ENCODE measurements at regions of chr18 and their contacts with region 1.

Region 1: DNA sequence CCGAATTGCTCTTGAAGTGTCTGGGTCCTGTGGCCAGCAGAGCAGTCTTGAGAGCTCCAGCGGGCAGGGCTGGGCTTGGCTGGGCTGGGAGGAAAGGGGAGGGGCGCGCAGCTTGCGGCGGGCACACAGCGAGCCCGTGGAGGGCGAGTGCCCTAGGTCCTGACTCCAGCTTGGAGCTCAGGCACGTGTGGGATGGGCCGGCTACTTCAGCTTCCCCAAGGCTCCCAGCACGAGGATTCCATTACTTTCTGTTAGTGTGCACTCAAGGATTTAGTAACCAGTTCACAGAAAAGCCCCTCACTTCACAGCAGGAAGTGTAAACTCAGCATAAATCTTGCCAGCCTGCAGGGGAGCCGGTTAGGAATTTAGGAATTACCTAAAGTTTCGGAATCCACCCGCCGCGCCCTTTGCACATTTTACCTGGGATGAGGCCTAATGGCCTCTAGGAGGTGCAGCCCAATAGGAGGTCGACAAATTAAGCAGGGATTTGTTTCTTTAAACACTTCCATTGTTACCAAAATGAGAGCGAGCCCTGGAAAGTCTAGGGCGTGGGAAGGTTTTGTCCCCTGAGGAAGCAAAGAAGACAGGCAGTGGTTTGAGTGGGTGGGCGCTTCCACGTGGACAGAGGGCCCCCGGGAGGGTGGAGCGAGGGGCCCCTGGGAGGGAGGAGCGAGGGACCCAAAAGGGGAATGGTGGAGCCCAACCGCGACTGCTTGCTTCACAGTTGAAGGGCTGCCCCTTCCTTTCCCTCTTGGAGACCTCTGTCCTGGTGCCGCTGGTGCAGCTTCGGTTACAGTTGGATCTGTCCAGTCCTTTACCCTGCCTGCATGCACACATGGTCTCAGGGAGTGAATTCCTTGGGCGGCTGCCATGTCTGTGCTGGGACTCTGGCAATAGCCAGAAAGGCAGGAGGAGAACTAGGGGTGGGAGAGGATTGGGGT is 93.3 kb downstream of the CTAGE1 start:
- DNase-seq: peak; percentile 24 to 54 (median 46)
- H3K4me3 ChIP-seq: peak overlapping the region; percentile 9 to 66 (median 28)
- H3K4me3 Mint-ChIP-seq: peak overlapping the region; percentile 73 to 80
- H3K27ac ChIP-seq: peak overlapping the region; percentile 25 to 65
- H3K27ac Mint-ChIP-seq: peak overlapping the region; percentile 80 to 94 (median 90)
- H3K4me1 ChIP-seq: peaks cover 47 to 55% of the 10 kb centered on the region in 2 donors
- H3K4me1 Mint-ChIP-seq: peaks cover 21% of the 10 kb centered on the region
- H3K27me3 ChIP-seq: no peaks in the 10 kb centered on the region
- H3K27me3 Mint-ChIP-seq: peaks cover 4 to 14% (median 9%) of the 10 kb centered on the region in 3 donors
- CTCF ChIP-seq: peak; percentile 19

Region 2: DNA sequence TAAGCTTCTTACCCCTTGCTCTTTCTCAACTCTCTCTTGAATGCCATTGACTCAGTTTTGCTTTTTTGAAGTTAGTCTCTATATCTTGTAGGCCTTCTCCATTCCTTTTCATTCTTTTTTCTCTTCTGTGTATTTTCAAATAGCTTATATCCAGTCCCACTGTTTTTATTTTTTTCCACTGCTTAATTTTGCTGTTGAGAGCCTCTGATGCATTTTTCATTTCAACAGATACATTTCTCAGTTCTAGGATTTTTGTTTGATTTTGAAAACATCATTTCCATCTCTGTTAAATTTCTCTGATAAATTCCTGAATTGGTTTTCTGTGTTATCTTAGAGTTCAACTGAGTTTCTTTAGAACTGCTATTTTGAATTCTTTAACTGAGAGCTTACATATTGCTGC is 537.9 kb before region 1 on chr18:
- intact Hi-C with region 1: no loop called
- DNase-seq: no peak
- H3K4me3 ChIP-seq: no peak overlapping the region
- H3K4me3 Mint-ChIP-seq: no peak overlapping the region
- H3K27ac ChIP-seq: no peak overlapping the region
- H3K27ac Mint-ChIP-seq: no peak overlapping the region
- H3K4me1 ChIP-seq: peaks cover 0 to 2% of the 10 kb centered on the region in 2 donors
- H3K4me1 Mint-ChIP-seq: peaks cover 6% of the 10 kb centered on the region
- H3K27me3 ChIP-seq: no peaks in the 10 kb centered on the region
- H3K27me3 Mint-ChIP-seq: no peaks in the 10 kb centered on the region
- CTCF ChIP-seq: no peak

Region 3: GRCh38 chr18:22279741-22280452 is 44.6 kb before region 1 on chr18:
- intact Hi-C with region 1: loop called in 1 of 2 experiments (anchors 5 kb)
- DNase-seq: no peak
- H3K4me3 ChIP-seq: no peak overlapping the region
- H3K4me3 Mint-ChIP-seq: no peak overlapping the region
- H3K27ac ChIP-seq: no peak overlapping the region
- H3K27ac Mint-ChIP-seq: peak overlapping the region in 3 of 7 donors; percentile 21 to 51 (median 43)
- H3K4me1 ChIP-seq: peaks cover 8 to 10% of the 10 kb centered on the region in 2 donors
- H3K4me1 Mint-ChIP-seq: peaks cover 10% of the 10 kb centered on the region
- H3K27me3 ChIP-seq: no peaks in the 10 kb centered on the region
- H3K27me3 Mint-ChIP-seq: peaks cover 0 to 4% (median 0%) of the 10 kb centered on the region in 3 donors
- CTCF ChIP-seq: no peak

Region 4: DNA sequence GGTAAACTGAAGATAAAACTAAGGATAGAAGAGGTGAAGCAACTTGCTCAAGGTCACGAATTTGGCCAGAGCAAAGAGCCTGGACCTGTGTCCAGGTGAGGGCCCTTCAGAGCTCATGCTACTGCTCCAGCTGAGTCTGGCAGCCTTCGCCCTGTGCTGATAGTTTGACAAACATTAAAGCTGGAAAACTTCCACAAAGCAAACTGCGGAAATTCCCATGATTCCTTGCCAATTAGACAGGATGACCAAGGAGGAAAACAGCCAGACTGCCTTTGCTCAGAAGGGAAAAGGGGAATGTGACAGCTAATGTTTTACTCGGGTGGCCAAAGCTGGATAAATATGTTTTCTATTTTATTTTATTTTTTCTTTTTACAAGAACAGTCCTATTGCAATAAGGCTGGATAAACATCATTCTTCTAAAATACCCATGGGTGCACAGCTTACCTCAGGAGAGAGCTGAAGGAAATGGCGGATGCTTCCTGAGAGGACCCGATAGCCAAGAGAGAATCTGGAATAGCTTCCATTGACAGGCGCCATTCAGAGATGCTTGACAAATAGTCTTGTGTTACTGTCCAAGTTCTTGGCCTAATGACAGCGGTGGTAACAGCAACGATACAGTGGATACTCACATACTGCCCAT is 98.6 kb after region 1 on chr18:
- intact Hi-C with region 1: no loop called
- DNase-seq: no peak
- H3K4me3 ChIP-seq: no peak overlapping the region
- H3K4me3 Mint-ChIP-seq: no peak overlapping the region
- H3K27ac ChIP-seq: no peak overlapping the region
- H3K27ac Mint-ChIP-seq: no peak overlapping the region
- H3K4me1 ChIP-seq: no peaks in the 10 kb centered on the region
- H3K4me1 Mint-ChIP-seq: no peaks in the 10 kb centered on the region
- H3K27me3 ChIP-seq: no peaks in the 10 kb centered on the region
- H3K27me3 Mint-ChIP-seq: peaks cover 0 to 1% (median under 1%) of the 10 kb centered on the region in 3 donors
- CTCF ChIP-seq: no peak

Region 5: DNA sequence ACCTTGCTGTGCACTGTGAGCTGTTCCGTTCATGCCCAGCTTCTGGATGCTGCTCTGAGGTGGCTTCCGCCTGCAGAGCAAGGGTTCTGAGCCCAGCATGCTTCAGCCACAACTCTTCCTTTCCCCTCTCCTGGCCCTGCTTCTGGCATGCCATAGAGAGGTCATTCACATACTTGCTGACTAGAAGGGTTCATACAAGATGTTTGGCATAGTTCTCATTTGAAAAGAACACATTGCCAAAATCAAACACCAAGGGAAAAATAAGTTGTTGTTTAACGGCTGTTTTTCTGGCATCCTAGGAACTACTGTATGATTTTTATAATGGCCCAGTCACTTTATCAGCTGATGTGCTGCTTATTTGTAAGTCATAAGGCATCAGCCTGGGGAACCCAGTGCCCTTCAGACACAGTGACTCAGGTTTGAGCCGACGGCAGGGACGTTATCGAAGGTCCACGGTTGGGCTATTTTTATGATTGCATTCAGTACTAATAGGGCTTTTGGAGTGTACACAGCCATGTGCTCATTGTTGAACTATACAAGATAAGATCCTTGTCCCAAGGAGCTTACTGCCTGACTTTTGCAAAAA is 147.2 kb after region 1 on chr18:
- intact Hi-C with region 1: no loop called
- DNase-seq: no peak
- H3K4me3 ChIP-seq: no peak overlapping the region
- H3K4me3 Mint-ChIP-seq: no peak overlapping the region
- H3K27ac ChIP-seq: no peak overlapping the region
- H3K27ac Mint-ChIP-seq: no peak overlapping the region
- H3K4me1 ChIP-seq: no peaks in the 10 kb centered on the region
- H3K4me1 Mint-ChIP-seq: no peaks in the 10 kb centered on the region
- H3K27me3 ChIP-seq: no peaks in the 10 kb centered on the region
- H3K27me3 Mint-ChIP-seq: peaks cover 0 to 3% (median 0%) of the 10 kb centered on the region in 3 donors
- CTCF ChIP-seq: no peak

Region 6: GRCh38 chr18:22563098-22563707 is 238.7 kb after region 1 on chr18:
- intact Hi-C with region 1: no loop called
- DNase-seq: peak in 1 of 3 donors; percentile 2
- H3K4me3 ChIP-seq: no peak overlapping the region
- H3K4me3 Mint-ChIP-seq: no peak overlapping the region
- H3K27ac ChIP-seq: no peak overlapping the region
- H3K27ac Mint-ChIP-seq: no peak overlapping the region
- H3K4me1 ChIP-seq: no peaks in the 10 kb centered on the region
- H3K4me1 Mint-ChIP-seq: peaks cover 2% of the 10 kb centered on the region
- H3K27me3 ChIP-seq: peaks cover 47 to 56% of the 10 kb centered on the region in 2 donors
- H3K27me3 Mint-ChIP-seq: peaks cover 24 to 43% (median 41%) of the 10 kb centered on the region in 3 donors
- CTCF ChIP-seq: peak; percentile 40